ENCODE measurements at regions of chr18 and their contacts with region 1.

Region 1: GRCh38 chr18:74342416-74343043 is 26.9 kb downstream of the C18orf63 start:
- DNase-seq: peak in 3 of 4 experiments; percentile 4 to 69 (median 9)
- ATAC-seq: peak; percentile 55; the same call in 1 of the 3 replicates
- H3K4me3 ChIP-seq: no peak overlapping the region
- H3K27ac ChIP-seq: no peak overlapping the region
- H3K4me1 ChIP-seq: peaks cover 0 to 8% of the 10 kb centered on the region in 2 experiments; a peak in 2 of 5 replicates
- H3K27me3 ChIP-seq: no peaks in the 10 kb centered on the region
- CTCF ChIP-seq: peak; percentile 25 to 77 (median 44); a peak in 3 of 6 replicates
- EP300 ChIP-seq: no peak
- POLR2A ChIP-seq: no peak
- RAD21 ChIP-seq: peak; percentile 84 to 90

Region 2: DNA sequence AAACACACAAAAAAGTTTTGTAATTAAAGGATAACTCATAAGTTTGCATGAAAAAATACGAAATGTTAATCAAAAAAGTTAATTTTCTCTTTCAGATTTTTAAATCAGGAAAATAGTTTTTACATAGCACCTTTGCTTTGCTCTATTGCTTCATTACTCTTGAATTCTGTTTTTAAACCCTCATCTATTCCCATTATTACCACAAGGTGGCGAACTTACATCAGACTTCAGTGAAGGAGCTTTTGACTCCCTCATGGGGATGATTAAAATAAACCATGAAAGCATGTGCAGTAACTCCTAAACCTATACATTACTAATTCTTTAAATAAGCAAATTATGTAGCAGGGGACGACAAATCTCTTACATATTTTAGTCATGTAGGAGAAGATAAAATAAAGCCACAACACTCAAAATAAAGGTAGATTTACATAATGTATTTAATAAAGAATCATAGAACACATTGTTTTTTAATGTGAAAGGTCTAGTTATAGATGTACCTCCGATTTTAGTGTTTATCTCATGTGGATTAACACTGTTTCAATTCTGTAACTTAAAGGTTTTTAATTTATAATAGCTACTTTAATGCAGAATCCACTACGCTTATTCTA is 1579.9 kb before region 1 on chr18:
- CTCF ChIA-PET with region 1: no interaction called
- POLR2A ChIA-PET with region 1: no interaction called
- in situ Hi-C with region 1: no loop called
- intact Hi-C with region 1: loop called (anchors 5 kb)
- DNase-seq: peak; percentile 12 to 45 (median 22)
- ATAC-seq: 0 out of 3 replicates have a peak, but pooled peaks have one; percentile 34
- H3K4me3 ChIP-seq: no peak overlapping the region
- H3K27ac ChIP-seq: no peak overlapping the region
- H3K4me1 ChIP-seq: no peaks in the 10 kb centered on the region
- H3K27me3 ChIP-seq: no peaks in the 10 kb centered on the region
- CTCF ChIP-seq: peak; percentile 30 to 58 (median 47); a peak in 4 of 6 replicates
- EP300 ChIP-seq: no peak
- POLR2A ChIP-seq: no peak
- RAD21 ChIP-seq: peak; percentile 67 to 78

Region 3: DNA sequence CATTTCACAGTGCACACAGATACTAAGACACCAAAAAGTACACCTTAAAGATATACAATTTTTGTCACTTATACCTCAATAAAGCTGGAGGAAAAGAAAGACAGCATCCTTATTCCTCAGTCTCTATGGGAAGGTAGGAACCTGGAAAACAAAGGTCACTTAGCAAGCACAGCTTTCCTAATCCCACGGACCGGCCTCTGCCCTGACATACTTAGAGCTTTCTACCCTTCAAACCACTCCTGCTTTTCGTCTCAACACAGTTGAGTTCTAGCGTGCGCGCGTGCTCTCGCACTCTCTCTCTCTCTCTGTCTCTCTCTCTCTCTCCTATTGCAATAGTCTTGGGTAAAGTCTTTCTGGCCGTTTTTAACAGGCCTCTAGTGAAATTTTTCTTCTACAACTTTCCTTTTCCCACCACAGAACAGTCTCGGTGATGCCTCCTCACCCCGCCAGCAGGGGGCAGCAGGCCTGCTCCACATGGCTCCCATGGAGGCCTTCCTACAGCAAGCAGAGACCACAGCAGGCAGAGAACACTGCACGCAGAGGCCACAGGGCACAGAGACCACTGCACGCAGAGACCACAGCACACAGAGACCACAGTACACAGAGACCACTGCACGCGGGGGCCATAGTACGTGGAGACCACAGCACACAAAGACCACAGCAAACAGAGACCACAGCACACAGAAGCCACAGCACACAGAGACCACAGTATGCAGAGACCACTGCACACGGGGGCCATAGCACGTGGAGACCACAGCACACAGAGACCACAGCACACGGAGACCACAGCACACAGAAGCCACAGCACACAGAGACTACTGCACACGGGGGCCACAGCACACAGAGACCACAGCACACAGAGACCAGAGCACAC is 301.8 kb before region 1 on chr18:
- CTCF ChIA-PET with region 1: no interaction called
- POLR2A ChIA-PET with region 1: no interaction called
- in situ Hi-C with region 1: no loop called
- intact Hi-C with region 1: loop called (anchors 2 kb)
- DNase-seq: peak; percentile 52 to 64 (median 57)
- ATAC-seq: peak; percentile 98
- H3K4me3 ChIP-seq: no peak overlapping the region
- H3K27ac ChIP-seq: no peak overlapping the region
- H3K4me1 ChIP-seq: no peaks in the 10 kb centered on the region
- H3K27me3 ChIP-seq: no peaks in the 10 kb centered on the region
- CTCF ChIP-seq: peak; percentile 63 to 69 (median 63)
- EP300 ChIP-seq: no peak
- POLR2A ChIP-seq: no peak
- RAD21 ChIP-seq: peak; percentile 42 to 55

Region 4: DNA sequence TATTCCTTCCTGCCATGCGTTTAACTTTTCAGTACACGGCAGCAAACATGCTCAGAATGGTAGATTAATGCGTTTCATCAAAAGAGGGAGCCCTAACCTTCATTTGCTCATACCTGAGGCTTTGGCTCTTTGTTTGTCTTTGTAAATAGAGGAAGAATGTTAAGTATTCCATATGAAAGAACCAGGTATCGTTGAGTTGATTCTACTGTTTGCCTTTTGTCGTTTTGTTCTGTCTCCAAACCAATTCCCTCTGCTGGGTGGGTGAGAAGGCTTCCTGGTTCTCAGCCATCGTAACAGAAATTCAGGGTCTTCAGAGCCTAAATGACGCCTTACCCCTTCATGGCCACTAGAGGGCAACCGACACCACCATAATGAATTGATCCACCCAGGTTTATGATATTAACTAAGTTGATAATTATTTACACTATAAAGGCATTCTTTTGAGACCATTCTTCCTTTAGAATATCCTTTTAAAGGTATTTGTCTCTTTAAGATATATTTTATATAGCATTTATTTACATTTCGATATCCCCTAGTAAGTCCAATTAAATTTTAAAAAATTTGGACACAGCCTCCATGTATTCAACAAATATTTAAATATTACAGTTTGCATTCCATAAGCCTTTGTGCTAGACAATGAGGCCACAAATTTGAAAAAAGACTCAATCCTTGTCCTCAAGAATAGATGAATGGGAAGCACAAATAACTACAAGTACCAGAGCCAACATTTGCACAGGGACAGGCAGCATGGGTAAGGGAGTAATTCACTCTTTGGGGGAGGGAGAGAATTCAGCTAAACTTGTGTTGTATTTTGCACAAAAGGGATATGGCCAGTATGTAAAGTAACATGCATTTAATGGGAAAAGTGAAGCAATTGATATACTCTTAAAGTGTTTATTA is 146.1 kb before region 1 on chr18:
- CTCF ChIA-PET with region 1: interaction called, 36 read pairs
- POLR2A ChIA-PET with region 1: interaction called, 3 read pairs
- in situ Hi-C with region 1: loop called (anchors 5 kb)
- intact Hi-C with region 1: loop called (anchors 1 kb)
- DNase-seq: peak; percentile 65 to 70 (median 68)
- ATAC-seq: peak; percentile 91
- H3K4me3 ChIP-seq: no peak overlapping the region
- H3K27ac ChIP-seq: no peak overlapping the region
- H3K4me1 ChIP-seq: no peaks in the 10 kb centered on the region; a peak in 2 of 5 replicates
- H3K27me3 ChIP-seq: peaks cover 0 to 11% of the 10 kb centered on the region in 2 experiments; a peak in 2 of 5 replicates
- CTCF ChIP-seq: peak; percentile 68 to 76 (median 72)
- EP300 ChIP-seq: no peak
- POLR2A ChIP-seq: no peak
- RAD21 ChIP-seq: peak; percentile 75 to 85

Region 5: DNA sequence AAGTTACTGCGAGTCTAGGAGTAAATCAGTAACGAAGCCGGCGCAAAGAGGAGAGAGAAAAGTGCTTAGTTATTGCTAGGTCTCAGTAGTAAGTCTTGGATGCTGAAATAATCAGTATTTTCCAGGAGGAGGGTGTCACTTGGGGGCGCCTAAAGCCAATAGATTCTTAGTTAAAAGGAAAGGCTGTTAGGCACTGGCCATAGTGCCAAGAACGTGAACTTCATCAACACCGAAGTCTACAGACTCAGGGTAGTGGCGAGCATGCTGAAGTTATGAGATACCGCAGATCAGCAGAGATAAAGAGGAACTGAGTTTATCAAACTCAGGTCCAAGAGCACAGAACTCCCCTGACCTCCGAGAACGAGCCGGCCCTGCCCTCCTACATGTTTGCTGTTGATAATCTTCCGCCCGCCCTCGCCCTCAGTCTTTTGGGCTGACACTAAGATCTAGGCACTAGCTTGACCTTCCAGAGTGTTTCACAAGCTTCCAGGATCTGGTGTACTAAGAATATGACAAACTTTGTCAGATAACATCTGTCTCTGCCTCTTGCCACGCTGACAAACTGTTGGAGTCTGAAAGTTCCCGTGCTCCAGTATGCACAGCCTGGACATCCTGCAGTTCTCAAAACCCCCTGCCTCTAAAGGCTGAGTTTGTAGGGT is 100.0 kb before region 1 on chr18:
- CTCF ChIA-PET with region 1: interaction called, 5 read pairs
- POLR2A ChIA-PET with region 1: no interaction called
- in situ Hi-C with region 1: no loop called
- intact Hi-C with region 1: loop called (anchors 1 kb)
- DNase-seq: peak; percentile 34 to 85 (median 54)
- ATAC-seq: peak; percentile 92
- H3K4me3 ChIP-seq: no peak overlapping the region
- H3K27ac ChIP-seq: peak overlapping the region; percentile 45; the same call in 2 of the 3 replicates
- H3K4me1 ChIP-seq: peaks cover 13 to 25% of the 10 kb centered on the region in 2 experiments; a peak in 3 of 5 replicates
- H3K27me3 ChIP-seq: no peaks in the 10 kb centered on the region
- CTCF ChIP-seq: peak in 2 of 3 experiments; percentile 38 to 57; a peak in 2 of 6 replicates
- EP300 ChIP-seq: peak; percentile 70; the same call in 1 of the 2 replicates
- POLR2A ChIP-seq: no peak
- RAD21 ChIP-seq: peak; percentile 63 to 78